Aorta (tissue), 5 donors: ENCODE measurements at regions of chr1 and their contacts with region 1.

Region 1: GRCh38 chr1:30379684-30380624 is 343.4 kb downstream of the MATN1 start:
- DNase-seq: no peak
- ATAC-seq: peak; percentile 85
- H3K4me3 ChIP-seq: no peak overlapping the region
- H3K27ac ChIP-seq: no peak overlapping the region
- H3K4me1 ChIP-seq: no peaks in the 10 kb centered on the region
- H3K27me3 ChIP-seq: no peaks in the 10 kb centered on the region

Region 2: GRCh38 chr1:29793101-29793546 is 586.8 kb before region 1 on chr1:
- intact Hi-C with region 1: loop called in 1 of 2 experiments (anchors 10 kb)
- DNase-seq: peak; percentile 90 to 91
- ATAC-seq: peak; percentile 60
- H3K4me3 ChIP-seq: no peak overlapping the region
- H3K27ac ChIP-seq: no peak overlapping the region
- H3K4me1 ChIP-seq: no peaks in the 10 kb centered on the region
- H3K27me3 ChIP-seq: no peaks in the 10 kb centered on the region

Region 3: GRCh38 chr1:30315185-30315960 is 64.6 kb before region 1 on chr1:
- intact Hi-C with region 1: no loop called
- DNase-seq: no peak
- ATAC-seq: no peak
- H3K4me3 ChIP-seq: no peak overlapping the region
- H3K27ac ChIP-seq: no peak overlapping the region
- H3K4me1 ChIP-seq: no peaks in the 10 kb centered on the region
- H3K27me3 ChIP-seq: peaks cover 0 to 1% of the 10 kb centered on the region in 2 donors

Region 4: GRCh38 chr1:30427545-30427944 is 47.6 kb after region 1 on chr1:
- intact Hi-C with region 1: no loop called
- DNase-seq: no peak
- ATAC-seq: no peak
- H3K4me3 ChIP-seq: no peak overlapping the region
- H3K27ac ChIP-seq: no peak overlapping the region
- H3K4me1 ChIP-seq: no peaks in the 10 kb centered on the region
- H3K27me3 ChIP-seq: no peaks in the 10 kb centered on the region